Heart left ventricle (tissue), 16 donors: ENCODE measurements at regions of chr18 and their contacts with region 1.

Region 1: GRCh38 chr18:55988537-55988936 is 400.5 kb upstream of the TCF4 start:
- DNase-seq: peak in 4 of 5 donors; percentile 36 to 70 (median 46)
- ATAC-seq: peak; percentile 94 to 98 (median 96)
- H3K4me3 ChIP-seq: no peak overlapping the region
- H3K27ac ChIP-seq: peak overlapping the region; percentile 11 to 90 (median 71)
- H3K4me1 ChIP-seq: peaks cover 0 to 14% (median 2%) of the 10 kb centered on the region in 12 donors
- H3K27me3 ChIP-seq: no peaks in the 10 kb centered on the region
- CTCF ChIP-seq: no peak
- POLR2A ChIP-seq: no peak

Region 2: GRCh38 chr18:55861266-55861665 is 127.3 kb before region 1 on chr18:
- intact Hi-C with region 1: loop called in 1 of 10 experiments (anchors 10 kb)
- DNase-seq: no peak
- ATAC-seq: peak in 1 of 4 donors; percentile 24
- H3K4me3 ChIP-seq: no peak overlapping the region
- H3K27ac ChIP-seq: no peak overlapping the region
- H3K4me1 ChIP-seq: peaks cover 0 to 23% (median 6%) of the 10 kb centered on the region in 12 donors
- H3K27me3 ChIP-seq: no peaks in the 10 kb centered on the region
- CTCF ChIP-seq: peak in 9 of 12 donors; percentile 28 to 57 (median 41)
- POLR2A ChIP-seq: no peak

Region 3: GRCh38 chr18:55878224-55878623 is 110.3 kb before region 1 on chr18:
- intact Hi-C with region 1: no loop called
- DNase-seq: no peak
- ATAC-seq: peak in 2 of 4 donors; percentile 45 to 50
- H3K4me3 ChIP-seq: no peak overlapping the region
- H3K27ac ChIP-seq: peak overlapping the region in 1 of 12 donors; percentile 19
- H3K4me1 ChIP-seq: peaks cover 0 to 13% (median 6%) of the 10 kb centered on the region in 12 donors
- H3K27me3 ChIP-seq: no peaks in the 10 kb centered on the region
- CTCF ChIP-seq: no peak
- POLR2A ChIP-seq: no peak

Region 4: DNA sequence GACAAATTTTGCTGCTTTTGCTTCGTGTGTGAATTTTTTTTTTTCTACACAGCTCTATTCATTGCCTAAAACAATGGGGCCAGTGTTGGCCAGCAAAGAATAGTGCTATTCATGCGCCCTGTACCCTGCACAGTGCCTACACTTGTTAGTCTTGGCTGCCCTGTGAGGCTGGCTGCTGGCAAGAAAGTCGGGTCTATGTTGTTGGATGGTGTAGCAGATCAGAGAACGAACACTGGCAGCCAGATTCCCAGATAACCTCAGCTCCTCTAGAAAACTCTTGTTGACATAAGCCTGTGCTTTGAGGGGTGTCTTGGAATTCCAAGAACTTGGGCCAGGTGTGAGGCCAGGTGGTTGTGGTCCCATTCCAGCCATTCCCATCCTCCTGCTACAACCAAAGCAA is 55.1 kb after region 1 on chr18:
- intact Hi-C with region 1: no loop called
- DNase-seq: peak in 1 of 5 donors; percentile 11
- ATAC-seq: peak in 2 of 4 donors; percentile 36 to 52
- H3K4me3 ChIP-seq: no peak overlapping the region
- H3K27ac ChIP-seq: no peak overlapping the region
- H3K4me1 ChIP-seq: no peaks in the 10 kb centered on the region
- H3K27me3 ChIP-seq: no peaks in the 10 kb centered on the region
- CTCF ChIP-seq: no peak
- POLR2A ChIP-seq: no peak